CD4-positive, alpha-beta memory T cell (primary cell): ENCODE measurements at regions of chr12 and their contacts with region 1.

Region 1: GRCh38 chr12:75944097-75944904 is 87.3 kb downstream of the PHLDA1 start:
- DNase-seq: peak in 4 of 5 donors; percentile 15 to 41 (median 25)
- H3K4me3 ChIP-seq: no peak overlapping the region
- H3K4me3 Mint-ChIP-seq: peak overlapping the region in 7 of 8 donors; percentile 13 to 78 (median 41)
- H3K27ac ChIP-seq: peak overlapping the region; percentile 22
- H3K27ac Mint-ChIP-seq: peak overlapping the region; percentile 80 to 93 (median 87)
- H3K4me1 ChIP-seq: peaks cover 20% of the 10 kb centered on the region
- H3K4me1 Mint-ChIP-seq: peaks cover 14 to 21% (median 19%) of the 10 kb centered on the region in 4 donors
- H3K27me3 ChIP-seq: no peaks in the 10 kb centered on the region
- H3K27me3 Mint-ChIP-seq: no peaks in the 10 kb centered on the region

Region 2: GRCh38 chr12:75571204-75571603 is 373.1 kb before region 1 on chr12:
- CTCF ChIA-PET with region 1: no interaction called
- POLR2A ChIA-PET with region 1: no interaction called
- intact Hi-C with region 1: no loop called
- DNase-seq: no peak
- H3K4me3 ChIP-seq: no peak overlapping the region
- H3K4me3 Mint-ChIP-seq: no peak overlapping the region
- H3K27ac ChIP-seq: no peak overlapping the region
- H3K27ac Mint-ChIP-seq: no peak overlapping the region
- H3K4me1 ChIP-seq: no peaks in the 10 kb centered on the region
- H3K4me1 Mint-ChIP-seq: no peaks in the 10 kb centered on the region
- H3K27me3 ChIP-seq: no peaks in the 10 kb centered on the region
- H3K27me3 Mint-ChIP-seq: peaks cover 0 to 2% of the 10 kb centered on the region in 2 donors

Region 3: GRCh38 chr12:75850721-75851462 is 93.4 kb before region 1 on chr12:
- CTCF ChIA-PET with region 1: no interaction called
- POLR2A ChIA-PET with region 1: no interaction called
- intact Hi-C with region 1: no loop called
- DNase-seq: no peak
- H3K4me3 ChIP-seq: no peak overlapping the region
- H3K4me3 Mint-ChIP-seq: no peak overlapping the region
- H3K27ac ChIP-seq: no peak overlapping the region
- H3K27ac Mint-ChIP-seq: no peak overlapping the region
- H3K4me1 ChIP-seq: no peaks in the 10 kb centered on the region
- H3K4me1 Mint-ChIP-seq: peaks cover 0 to 7% (median 0%) of the 10 kb centered on the region in 4 donors
- H3K27me3 ChIP-seq: no peaks in the 10 kb centered on the region
- H3K27me3 Mint-ChIP-seq: peaks cover 0 to 12% of the 10 kb centered on the region in 2 donors

Region 4: GRCh38 chr12:75933101-75933500 is 11.2 kb before region 1 on chr12:
- CTCF ChIA-PET with region 1: no interaction called
- POLR2A ChIA-PET with region 1: no interaction called
- intact Hi-C with region 1: loop called (anchors 1 kb)
- DNase-seq: no peak
- H3K4me3 ChIP-seq: no peak overlapping the region
- H3K4me3 Mint-ChIP-seq: no peak overlapping the region
- H3K27ac ChIP-seq: no peak overlapping the region
- H3K27ac Mint-ChIP-seq: no peak overlapping the region
- H3K4me1 ChIP-seq: peaks cover 23% of the 10 kb centered on the region
- H3K4me1 Mint-ChIP-seq: peaks cover 8 to 18% (median 9%) of the 10 kb centered on the region in 4 donors
- H3K27me3 ChIP-seq: no peaks in the 10 kb centered on the region
- H3K27me3 Mint-ChIP-seq: no peaks in the 10 kb centered on the region

Region 5: GRCh38 chr12:76020731-76021672 is 76.7 kb after region 1 on chr12:
- CTCF ChIA-PET with region 1: no interaction called
- POLR2A ChIA-PET with region 1: interaction called, 3 read pairs
- intact Hi-C with region 1: loop called (anchors 1 kb)
- DNase-seq: peak; percentile 79 to 90 (median 82)
- H3K4me3 ChIP-seq: no peak overlapping the region
- H3K4me3 Mint-ChIP-seq: peak overlapping the region; percentile 38 to 81 (median 56)
- H3K27ac ChIP-seq: peak overlapping the region; percentile 77
- H3K27ac Mint-ChIP-seq: peak overlapping the region; percentile 95 to 99 (median 97)
- H3K4me1 ChIP-seq: peaks cover 26% of the 10 kb centered on the region
- H3K4me1 Mint-ChIP-seq: peaks cover 18 to 45% (median 34%) of the 10 kb centered on the region in 4 donors
- H3K27me3 ChIP-seq: no peaks in the 10 kb centered on the region
- H3K27me3 Mint-ChIP-seq: no peaks in the 10 kb centered on the region

Region 6: GRCh38 chr12:76152161-76152807 is 208.0 kb after region 1 on chr12:
- CTCF ChIA-PET with region 1: no interaction called
- POLR2A ChIA-PET with region 1: no interaction called
- intact Hi-C with region 1: no loop called
- DNase-seq: no peak
- H3K4me3 ChIP-seq: no peak overlapping the region
- H3K4me3 Mint-ChIP-seq: no peak overlapping the region
- H3K27ac ChIP-seq: no peak overlapping the region
- H3K27ac Mint-ChIP-seq: no peak overlapping the region
- H3K4me1 ChIP-seq: no peaks in the 10 kb centered on the region
- H3K4me1 Mint-ChIP-seq: peaks cover 3 to 5% (median 4%) of the 10 kb centered on the region in 4 donors
- H3K27me3 ChIP-seq: no peaks in the 10 kb centered on the region
- H3K27me3 Mint-ChIP-seq: no peaks in the 10 kb centered on the region